Panc1 (cell line): ENCODE measurements at regions of chr13 and their contacts with region 1.

Region 1: DNA sequence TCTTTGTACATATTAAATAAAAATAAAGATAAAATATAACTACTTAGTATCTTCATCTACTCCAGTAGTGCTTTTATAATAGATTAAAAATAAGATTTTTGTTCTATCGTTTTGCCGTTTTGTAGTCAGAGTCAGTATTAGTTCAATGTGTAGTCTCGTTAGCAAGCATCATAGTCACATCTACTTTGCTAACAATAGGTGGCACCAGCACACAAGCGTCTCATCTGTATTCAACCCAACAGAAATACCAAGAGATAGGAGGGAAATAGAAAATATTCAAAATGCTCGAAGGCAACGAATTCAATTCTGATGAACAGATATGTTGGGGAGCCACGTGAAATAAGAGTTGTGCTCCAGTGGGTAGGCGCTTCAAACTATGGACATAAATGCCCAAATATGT is 21.4 kb upstream of the MICU2 start:
- DNase-seq: no peak
- ATAC-seq: no peak
- H3K4me3 ChIP-seq: no peak overlapping the region
- H3K27ac ChIP-seq: no peak overlapping the region
- H3K4me1 ChIP-seq: no peaks in the 10 kb centered on the region
- H3K27me3 ChIP-seq: 0 out of 2 replicates have a peak, but pooled peaks cover 2% of the 10 kb centered on the region
- CTCF ChIP-seq: peak; percentile 68

Region 2: DNA sequence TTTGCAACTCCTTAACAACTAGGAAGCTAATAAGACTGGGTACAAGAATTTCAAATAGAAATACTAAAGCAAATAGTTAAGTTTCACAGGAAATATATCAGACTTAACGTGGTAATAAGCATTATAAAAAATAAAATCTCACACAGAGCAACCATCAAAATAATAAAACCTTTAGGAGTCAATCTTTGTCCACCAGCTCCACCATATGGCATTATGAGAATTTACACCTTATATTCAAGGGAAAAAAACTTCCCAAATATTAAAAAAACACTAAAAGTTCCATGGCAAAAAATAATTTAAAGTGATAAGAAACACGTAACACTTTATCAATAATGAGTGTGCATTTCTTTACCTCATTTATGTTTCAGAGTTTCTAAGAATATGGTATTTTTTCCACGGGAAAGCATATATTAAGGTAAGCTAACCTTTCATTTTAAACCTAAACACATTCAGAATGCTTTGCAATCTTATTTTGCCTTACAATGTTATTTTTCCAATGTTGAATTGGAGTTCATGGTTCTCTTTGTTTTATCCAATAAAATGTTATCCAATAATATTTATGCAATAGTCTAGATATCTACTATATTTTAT is 1132.3 kb after region 1 on chr13:
- CTCF ChIA-PET with region 1: no interaction called
- POLR2A ChIA-PET with region 1: no interaction called
- in situ Hi-C with region 1: no loop called
- intact Hi-C with region 1: loop called (anchors 1 kb)
- DNase-seq: no peak
- ATAC-seq: no peak
- H3K4me3 ChIP-seq: no peak overlapping the region
- H3K27ac ChIP-seq: no peak overlapping the region
- H3K4me1 ChIP-seq: no peaks in the 10 kb centered on the region
- H3K27me3 ChIP-seq: no peaks in the 10 kb centered on the region
- CTCF ChIP-seq: peak; percentile 22; the same call in 1 of the 2 replicates